ENCODE measurements at regions of chr9 and their contacts with region 1.

Region 1: GRCh38 chr9:101235105-101235866 is 149.5 kb downstream of the BAAT start:
- DNase-seq: no peak
- ATAC-seq: no peak
- H3K4me3 ChIP-seq: no peak overlapping the region
- H3K27ac ChIP-seq: no peak overlapping the region
- H3K4me1 ChIP-seq: no peaks in the 10 kb centered on the region
- H3K27me3 ChIP-seq: no peaks in the 10 kb centered on the region
- CTCF ChIP-seq: peak; percentile 34

Region 2: DNA sequence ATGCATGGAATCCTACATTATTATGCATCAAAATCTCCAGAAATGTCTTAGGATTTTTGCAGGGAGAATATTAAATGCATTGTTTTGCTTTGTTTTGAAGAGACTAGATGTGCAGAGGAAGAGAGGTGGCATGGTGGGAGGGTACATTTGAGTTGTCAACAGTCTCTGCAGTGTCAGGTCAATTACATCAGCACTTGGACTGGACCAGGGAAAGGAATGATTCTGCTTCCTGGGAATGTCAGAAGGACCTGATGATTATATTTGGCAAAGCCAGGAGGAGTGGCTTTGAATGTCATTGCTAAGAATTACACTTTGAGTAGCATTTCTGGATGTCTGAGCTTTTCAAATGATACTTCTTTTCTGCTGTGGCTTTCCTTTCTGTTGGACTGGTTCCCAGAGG is 779.8 kb before region 1 on chr9:
- intact Hi-C with region 1: no loop called
- DNase-seq: no peak
- ATAC-seq: peak; percentile 43 to 73 (median 69)
- H3K4me3 ChIP-seq: no peak overlapping the region
- H3K27ac ChIP-seq: no peak overlapping the region
- H3K4me1 ChIP-seq: peaks cover 9% of the 10 kb centered on the region
- H3K27me3 ChIP-seq: no peaks in the 10 kb centered on the region
- CTCF ChIP-seq: no peak

Region 3: GRCh38 chr9:100700689-100701318 is 534.5 kb before region 1 on chr9:
- intact Hi-C with region 1: loop called in 1 of 2 experiments (anchors 10 kb)
- DNase-seq: no peak
- ATAC-seq: peak in 1 of 4 donors; percentile 42
- H3K4me3 ChIP-seq: no peak overlapping the region
- H3K27ac ChIP-seq: no peak overlapping the region
- H3K4me1 ChIP-seq: no peaks in the 10 kb centered on the region
- H3K27me3 ChIP-seq: no peaks in the 10 kb centered on the region
- CTCF ChIP-seq: peak; percentile 39

Region 4: GRCh38 chr9:100774962-100775361 is 460.3 kb before region 1 on chr9:
- intact Hi-C with region 1: no loop called
- DNase-seq: no peak
- ATAC-seq: no peak
- H3K4me3 ChIP-seq: no peak overlapping the region
- H3K27ac ChIP-seq: no peak overlapping the region
- H3K4me1 ChIP-seq: no peaks in the 10 kb centered on the region
- H3K27me3 ChIP-seq: no peaks in the 10 kb centered on the region
- CTCF ChIP-seq: no peak

Region 5: GRCh38 chr9:101176384-101176783 is 58.9 kb before region 1 on chr9:
- intact Hi-C with region 1: loop called in 1 of 2 experiments (anchors 10 kb)
- DNase-seq: no peak
- ATAC-seq: no peak
- H3K4me3 ChIP-seq: no peak overlapping the region
- H3K27ac ChIP-seq: no peak overlapping the region
- H3K4me1 ChIP-seq: no peaks in the 10 kb centered on the region
- H3K27me3 ChIP-seq: no peaks in the 10 kb centered on the region
- CTCF ChIP-seq: no peak

Region 6: DNA sequence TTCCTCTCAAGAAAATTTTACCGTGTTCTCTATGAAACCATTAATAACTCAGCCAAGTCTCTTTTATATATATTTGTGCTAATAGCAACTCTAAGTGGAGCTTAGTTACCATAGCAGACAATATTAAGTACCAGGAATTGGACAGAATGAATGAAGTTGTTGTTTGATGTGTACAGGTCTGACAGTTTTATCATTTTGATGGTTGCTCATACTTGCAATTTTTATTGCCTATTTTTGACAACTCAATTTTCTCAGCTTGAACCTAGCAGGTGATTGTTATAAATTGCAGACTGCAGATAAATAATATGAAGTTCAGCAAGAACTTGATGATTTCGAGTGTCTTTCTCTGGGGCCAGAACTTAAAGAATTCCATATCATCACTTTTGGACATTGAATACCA is 43.6 kb before region 1 on chr9:
- intact Hi-C with region 1: no loop called
- DNase-seq: no peak
- ATAC-seq: no peak
- H3K4me3 ChIP-seq: no peak overlapping the region
- H3K27ac ChIP-seq: no peak overlapping the region
- H3K4me1 ChIP-seq: no peaks in the 10 kb centered on the region
- H3K27me3 ChIP-seq: no peaks in the 10 kb centered on the region
- CTCF ChIP-seq: no peak

Region 7: DNA sequence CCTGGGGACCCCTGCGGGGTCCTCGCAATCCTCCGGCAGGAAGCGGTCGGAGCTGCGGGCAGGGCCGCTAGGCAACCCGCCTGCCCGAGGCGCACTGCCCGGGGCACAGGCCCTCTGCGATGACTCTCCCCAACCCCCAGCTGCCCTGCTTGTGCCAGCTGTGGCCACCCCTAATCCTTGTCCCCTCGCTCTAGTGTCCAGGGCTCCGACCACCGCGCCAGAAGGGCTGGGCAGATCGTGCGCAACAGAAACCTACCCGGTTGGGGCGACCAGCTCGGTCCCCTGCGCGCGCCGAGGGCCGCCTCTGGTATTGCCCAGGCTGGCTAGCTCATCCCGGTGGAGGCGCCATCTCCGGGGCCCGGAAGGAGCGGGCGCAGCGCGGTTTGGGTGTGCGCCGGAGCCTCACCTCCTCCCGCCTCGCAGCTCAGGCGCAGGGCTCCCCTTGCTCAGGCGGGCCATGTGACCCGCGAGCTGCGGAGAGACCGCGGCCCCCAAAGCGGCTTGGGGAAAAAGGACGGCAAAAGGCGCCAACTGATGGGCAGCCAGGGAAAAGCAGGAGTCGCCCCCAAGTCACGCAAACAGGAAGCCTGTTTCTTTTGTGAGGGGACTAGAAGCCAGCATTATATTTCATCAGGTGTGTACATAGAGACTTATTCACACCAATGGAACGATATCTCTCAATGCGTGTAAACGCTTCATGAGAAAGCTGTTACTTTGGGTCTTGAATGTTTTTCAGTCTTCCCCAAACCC is 251.6 kb after region 1 on chr9:
- intact Hi-C with region 1: no loop called
- DNase-seq: peak; percentile 39 to 75
- ATAC-seq: peak; percentile 76 to 92 (median 84)
- H3K4me3 ChIP-seq: peak overlapping the region; percentile 93
- H3K27ac ChIP-seq: peak overlapping the region; percentile 74
- H3K4me1 ChIP-seq: peaks cover 7% of the 10 kb centered on the region
- H3K27me3 ChIP-seq: no peaks in the 10 kb centered on the region
- CTCF ChIP-seq: no peak

Measured in psoas muscle (tissue), 8 donors.